Dendritic cell treated with granulocyte-macrophage colony-stimulating factor and Interleukin-4, amounts not matched to agents 40 ng/mL and 50 ng/mL, for 4 days (primary cell): ENCODE measurements at regions of chr15 and their contacts with region 1.

Region 1: DNA sequence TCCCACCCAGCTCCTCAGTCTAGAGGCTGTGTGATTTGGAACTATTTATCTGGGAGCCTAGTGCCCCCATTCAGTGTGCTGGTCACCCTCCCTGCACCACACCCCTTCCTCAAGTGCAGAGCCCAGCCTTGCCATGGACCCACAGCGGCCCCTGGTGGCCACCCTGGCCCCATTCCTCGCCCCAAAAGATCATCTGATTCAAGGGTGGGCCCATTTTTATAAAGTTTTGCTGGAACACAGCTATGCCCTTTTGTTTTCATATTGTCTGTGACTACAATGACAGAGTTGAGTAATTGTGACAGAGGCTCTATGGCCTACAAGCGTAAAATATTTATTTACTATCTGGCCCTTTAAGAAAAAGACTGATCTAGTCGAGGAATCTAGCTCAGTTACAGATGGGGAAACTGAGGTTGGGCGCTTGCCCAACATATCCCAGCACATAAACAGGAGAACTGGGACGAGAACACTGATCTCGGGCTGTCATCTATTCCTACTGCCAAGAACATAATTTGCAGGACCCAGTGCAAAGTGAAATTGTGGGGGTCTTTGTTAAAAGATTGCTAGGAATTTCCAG is 1.8 kb downstream of the FES start:
- H3K4me3 Mint-ChIP-seq: peak overlapping the region; percentile 98
- H3K27ac Mint-ChIP-seq: peak overlapping the region; percentile 95
- H3K4me1 Mint-ChIP-seq: peaks cover 90% of the 10 kb centered on the region
- H3K27me3 Mint-ChIP-seq: no peaks in the 10 kb centered on the region

Region 2: GRCh38 chr15:90648137-90649070 is 237.7 kb before region 1 on chr15:
- intact Hi-C with region 1: loop called (anchors 1 kb)
- H3K4me3 Mint-ChIP-seq: peak overlapping the region; percentile 43
- H3K27ac Mint-ChIP-seq: peak overlapping the region; percentile 92
- H3K4me1 Mint-ChIP-seq: peaks cover 71% of the 10 kb centered on the region
- H3K27me3 Mint-ChIP-seq: no peaks in the 10 kb centered on the region

Region 3: DNA sequence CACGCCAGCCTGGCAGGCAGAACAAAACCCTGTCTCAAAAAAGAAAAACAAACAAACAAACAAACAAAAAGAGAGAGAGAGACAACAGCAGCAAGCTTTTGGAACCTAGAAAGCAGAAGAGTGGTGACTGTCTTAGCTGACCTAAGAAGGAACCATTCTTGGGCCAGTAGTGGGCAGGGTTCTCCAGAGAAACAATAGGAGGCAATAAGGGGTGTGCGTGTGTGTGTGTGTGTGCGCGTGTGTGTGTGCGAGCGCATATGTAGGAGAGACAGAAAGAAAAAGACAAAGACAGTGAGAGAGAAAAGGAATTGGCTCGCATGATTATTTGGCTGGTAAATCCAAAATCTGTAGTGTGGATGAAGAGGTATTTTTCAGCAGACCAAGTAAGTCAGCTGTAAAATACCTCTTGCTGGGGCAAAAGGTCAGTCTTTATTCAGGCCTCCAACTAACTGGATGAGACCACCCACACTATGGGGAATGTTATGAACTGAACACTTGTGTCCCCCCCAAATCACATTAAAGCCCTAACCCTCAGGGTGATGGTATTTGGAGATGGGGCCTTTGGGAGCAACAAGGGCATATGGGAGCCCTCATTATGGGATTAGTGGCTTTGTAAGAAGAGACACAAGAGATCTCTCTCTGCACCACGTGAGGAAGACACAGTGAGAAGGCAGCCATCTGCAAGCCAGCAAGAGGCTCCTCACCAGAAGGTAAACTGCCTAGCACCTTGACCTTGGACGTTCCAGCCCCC is 184.1 kb before region 1 on chr15:
- intact Hi-C with region 1: loop called (anchors 2 kb)
- H3K4me3 Mint-ChIP-seq: peak overlapping the region; percentile 43
- H3K27ac Mint-ChIP-seq: peak overlapping the region; percentile 76
- H3K4me1 Mint-ChIP-seq: peaks cover 32% of the 10 kb centered on the region
- H3K27me3 Mint-ChIP-seq: no peaks in the 10 kb centered on the region

Region 4: DNA sequence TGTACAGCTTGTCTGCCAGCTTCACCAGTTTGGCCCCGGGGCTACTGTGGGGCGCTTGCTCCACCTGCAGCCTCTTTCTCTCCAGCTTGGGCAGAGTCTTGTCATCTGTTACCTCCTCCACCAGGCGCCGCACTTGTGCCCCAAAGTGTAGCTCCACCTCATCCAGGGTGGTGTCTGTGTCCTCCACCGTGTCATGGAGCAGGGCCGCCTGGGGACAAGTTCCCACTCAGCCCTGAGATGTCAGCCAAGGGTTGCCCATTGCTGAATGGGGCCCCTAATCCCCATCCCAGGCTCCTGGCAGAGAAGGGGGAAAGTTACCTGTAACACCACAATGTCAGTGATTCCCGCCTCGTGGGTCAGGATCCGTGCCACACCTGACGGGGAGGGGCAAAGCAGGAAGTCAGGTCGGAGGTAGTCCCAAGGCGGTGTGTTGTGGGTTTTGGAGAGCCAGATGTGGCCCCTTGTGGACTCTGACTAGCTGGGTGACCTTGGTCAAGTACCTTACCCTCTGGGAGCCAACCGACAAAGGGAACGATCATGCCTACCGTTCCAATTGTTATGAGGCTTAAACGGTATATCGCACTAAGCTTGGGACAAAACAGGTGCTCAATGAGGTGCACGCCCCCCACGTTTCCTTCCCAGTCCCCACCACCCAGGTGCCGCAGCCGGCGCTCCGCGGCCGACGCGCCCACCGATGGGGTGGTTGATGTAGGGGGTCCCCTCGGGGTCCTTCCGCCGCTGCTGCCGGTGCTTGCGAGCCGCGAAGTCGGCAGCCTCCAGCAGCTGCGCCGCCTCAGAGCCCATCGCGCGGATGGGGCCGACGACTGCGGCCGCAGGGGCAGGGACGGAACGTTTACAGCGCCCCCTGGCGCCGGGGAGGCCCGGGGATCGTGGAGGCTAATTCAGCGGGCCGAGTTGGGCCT is 45.9 kb after region 1 on chr15 and contains the start of gene HDDC3:
- intact Hi-C with region 1: loop called (anchors 10 kb)
- H3K4me3 Mint-ChIP-seq: peak within 1 kb of the TSS; percentile 85
- H3K27ac Mint-ChIP-seq: peak within 1 kb of the TSS; percentile 97
- H3K4me1 Mint-ChIP-seq: peaks cover 64% of the 10 kb centered on the region
- H3K27me3 Mint-ChIP-seq: no peaks in the 10 kb centered on the region

Region 5: GRCh38 chr15:91007266-91007665 is 121.1 kb after region 1 on chr15:
- intact Hi-C with region 1: no loop called
- H3K4me3 Mint-ChIP-seq: no peak overlapping the region
- H3K27ac Mint-ChIP-seq: no peak overlapping the region
- H3K4me1 Mint-ChIP-seq: no peaks in the 10 kb centered on the region
- H3K27me3 Mint-ChIP-seq: no peaks in the 10 kb centered on the region